Activated CD4-positive, alpha-beta T cell treated with anti-CD3 and anti-CD28 coated beads for 36 hours (primary cell): ENCODE measurements at regions of chr2 and their contacts with region 1.

Region 1: GRCh38 chr2:73233154-73233931 is at the start of gene PRADC1:
- DNase-seq: peak; percentile 96
- ATAC-seq: peak; percentile 89
- H3K4me3 Mint-ChIP-seq: peak within 1 kb of the TSS; percentile 92
- H3K27ac Mint-ChIP-seq: peak within 1 kb of the TSS; percentile 98
- H3K4me1 Mint-ChIP-seq: peaks cover 32% of the 10 kb centered on the region
- H3K27me3 Mint-ChIP-seq: no peaks in the 10 kb centered on the region
- total RNA-seq, gene PRADC1: 11.8 to 12.1 TPM

Region 2: GRCh38 chr2:73218298-73218697 is 15.0 kb before region 1 on chr2:
- CTCF ChIA-PET with region 1: interaction called, 37 read pairs
- POLR2A ChIA-PET with region 1: interaction called, 6 read pairs
- intact Hi-C with region 1: loop called (anchors 1 kb)
- DNase-seq: no peak
- ATAC-seq: no peak
- H3K4me3 Mint-ChIP-seq: no peak overlapping the region
- H3K27ac Mint-ChIP-seq: no peak overlapping the region
- H3K4me1 Mint-ChIP-seq: peaks cover 24% of the 10 kb centered on the region
- H3K27me3 Mint-ChIP-seq: no peaks in the 10 kb centered on the region

Region 3: GRCh38 chr2:73284296-73285158 is 51.2 kb after region 1 on chr2 and contains the start of gene FBXO41:
- CTCF ChIA-PET with region 1: interaction called, 33 read pairs
- POLR2A ChIA-PET with region 1: no interaction called
- intact Hi-C with region 1: loop called (anchors 1 to 2 kb)
- DNase-seq: peak; percentile 86
- ATAC-seq: peak; percentile 85
- H3K4me3 Mint-ChIP-seq: peak within 1 kb of the TSS; percentile 78
- H3K27ac Mint-ChIP-seq: peak within 1 kb of the TSS; percentile 75
- H3K4me1 Mint-ChIP-seq: peaks cover 15% of the 10 kb centered on the region
- H3K27me3 Mint-ChIP-seq: peaks cover 19% of the 10 kb centered on the region
- total RNA-seq, gene FBXO41: 27.7 to 29.5 TPM

Region 4: DNA sequence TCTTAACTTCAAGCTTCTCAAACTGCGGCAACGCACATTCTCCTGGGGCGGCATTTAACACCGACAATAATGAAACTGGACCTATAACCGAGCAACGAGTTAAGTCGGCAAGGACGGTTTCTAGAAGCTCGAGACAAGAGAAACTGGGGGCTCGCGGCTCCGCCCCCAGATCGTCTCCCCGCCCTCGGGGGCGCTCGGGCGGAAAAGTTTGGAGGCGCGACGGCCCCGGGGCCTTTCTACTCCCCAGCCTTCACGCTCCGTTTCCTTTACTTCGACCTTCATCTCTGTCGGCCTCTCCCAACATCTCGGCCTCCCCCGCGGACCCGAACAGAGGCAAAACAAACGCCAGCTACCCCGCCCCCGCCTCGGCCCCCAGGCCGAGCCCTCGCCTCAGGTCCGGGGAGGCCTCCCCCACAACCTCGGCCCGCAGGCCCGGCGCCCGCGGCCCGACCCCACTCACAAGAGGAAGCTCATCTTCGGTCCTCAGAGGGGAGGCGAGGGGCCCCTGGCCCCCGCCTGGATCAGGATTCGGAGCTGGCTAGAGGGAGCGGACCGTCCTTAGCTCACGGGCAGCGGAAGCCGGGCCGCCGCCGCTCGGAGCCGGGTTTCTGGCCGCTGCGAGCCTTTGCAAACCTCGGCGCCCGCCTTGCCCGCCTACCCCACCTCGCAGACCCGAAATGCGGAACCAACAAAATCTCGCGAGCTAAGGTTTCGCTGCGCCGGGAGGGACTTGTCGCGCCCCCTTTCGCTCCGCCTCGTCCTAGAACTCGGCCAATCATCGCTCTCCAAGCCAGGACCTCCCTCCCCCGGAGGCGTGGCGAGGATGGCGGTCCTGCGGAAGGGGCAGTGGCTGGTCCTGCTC is 945.1 kb after region 1 on chr2 and contains the start of gene MOB1A:
- CTCF ChIA-PET with region 1: no interaction called
- POLR2A ChIA-PET with region 1: interaction called, 3 read pairs
- intact Hi-C with region 1: loop called in 1 of 2 experiments (anchors 2 kb)
- DNase-seq: peak; percentile 99
- ATAC-seq: peak; percentile 95
- H3K4me3 Mint-ChIP-seq: peak within 1 kb of the TSS; percentile 82
- H3K27ac Mint-ChIP-seq: peak within 1 kb of the TSS; percentile 87
- H3K4me1 Mint-ChIP-seq: peaks cover 42% of the 10 kb centered on the region
- H3K27me3 Mint-ChIP-seq: no peaks in the 10 kb centered on the region
- total RNA-seq, gene MOB1A: 96.6 to 149 TPM